Gastrocnemius medialis (tissue), 4 donors: ENCODE measurements at regions of chr7 and their contacts with region 1.

Region 1: GRCh38 chr7:149021725-149022062 is 6.6 kb downstream of the PDIA4 start:
- DNase-seq: no peak
- ATAC-seq: no peak
- H3K4me3 ChIP-seq: no peak overlapping the region
- H3K27ac ChIP-seq: no peak overlapping the region
- H3K4me1 ChIP-seq: peaks cover 3 to 4% of the 10 kb centered on the region in 2 donors
- H3K27me3 ChIP-seq: no peaks in the 10 kb centered on the region
- CTCF ChIP-seq: no peak
- POLR2A ChIP-seq: no peak

Region 2: GRCh38 chr7:149081914-149082313 is 60.2 kb after region 1 on chr7:
- in situ Hi-C with region 1: loop called in 1 of 4 experiments (anchors 5 kb)
- intact Hi-C with region 1: no loop called
- DNase-seq: no peak
- ATAC-seq: no peak
- H3K4me3 ChIP-seq: no peak overlapping the region
- H3K27ac ChIP-seq: no peak overlapping the region
- H3K4me1 ChIP-seq: no peaks in the 10 kb centered on the region
- H3K27me3 ChIP-seq: no peaks in the 10 kb centered on the region
- CTCF ChIP-seq: no peak
- POLR2A ChIP-seq: no peak

Region 3: GRCh38 chr7:149547126-149547525 is 525.4 kb after region 1 on chr7:
- in situ Hi-C with region 1: no loop called
- intact Hi-C with region 1: no loop called
- DNase-seq: no peak
- ATAC-seq: no peak
- H3K4me3 ChIP-seq: no peak overlapping the region
- H3K27ac ChIP-seq: no peak overlapping the region
- H3K4me1 ChIP-seq: no peaks in the 10 kb centered on the region
- H3K27me3 ChIP-seq: no peaks in the 10 kb centered on the region
- CTCF ChIP-seq: no peak
- POLR2A ChIP-seq: no peak